Mucosa of descending colon (tissue), 3 donors: ENCODE measurements at regions of chr6 and their contacts with region 1.

Region 1: GRCh38 chr6:3742426-3743344 is 8.8 kb downstream of the PXDC1 start:
- DNase-seq: peak; percentile 89 to 94 (median 92)
- ATAC-seq: peak; percentile 94
- H3K4me3 ChIP-seq: no peak overlapping the region
- H3K4me1 ChIP-seq: peaks cover 6% of the 10 kb centered on the region
- CTCF ChIP-seq: peak; percentile 86

Region 2: GRCh38 chr6:3825851-3826581 is 83.3 kb after region 1 on chr6:
- intact Hi-C with region 1: loop called (anchors 10 kb)
- DNase-seq: peak; percentile 56 to 85 (median 75)
- ATAC-seq: peak; percentile 94
- H3K4me3 ChIP-seq: no peak overlapping the region
- H3K4me1 ChIP-seq: no peaks in the 10 kb centered on the region
- CTCF ChIP-seq: no peak

Region 3: GRCh38 chr6:3835055-3835731 is 92.5 kb after region 1 on chr6:
- intact Hi-C with region 1: loop called in 1 of 2 experiments (anchors 10 kb)
- DNase-seq: peak in 1 of 3 donors; percentile 41
- ATAC-seq: peak; percentile 91
- H3K4me3 ChIP-seq: no peak overlapping the region
- H3K4me1 ChIP-seq: no peaks in the 10 kb centered on the region
- CTCF ChIP-seq: no peak

Region 4: GRCh38 chr6:3887150-3887700 is 144.5 kb after region 1 on chr6:
- intact Hi-C with region 1: loop called in 1 of 2 experiments (anchors 5 kb)
- DNase-seq: peak in 1 of 3 donors; percentile 30
- ATAC-seq: peak; percentile 21
- H3K4me3 ChIP-seq: no peak overlapping the region
- H3K4me1 ChIP-seq: peaks cover 13% of the 10 kb centered on the region
- CTCF ChIP-seq: no peak

Region 5: DNA sequence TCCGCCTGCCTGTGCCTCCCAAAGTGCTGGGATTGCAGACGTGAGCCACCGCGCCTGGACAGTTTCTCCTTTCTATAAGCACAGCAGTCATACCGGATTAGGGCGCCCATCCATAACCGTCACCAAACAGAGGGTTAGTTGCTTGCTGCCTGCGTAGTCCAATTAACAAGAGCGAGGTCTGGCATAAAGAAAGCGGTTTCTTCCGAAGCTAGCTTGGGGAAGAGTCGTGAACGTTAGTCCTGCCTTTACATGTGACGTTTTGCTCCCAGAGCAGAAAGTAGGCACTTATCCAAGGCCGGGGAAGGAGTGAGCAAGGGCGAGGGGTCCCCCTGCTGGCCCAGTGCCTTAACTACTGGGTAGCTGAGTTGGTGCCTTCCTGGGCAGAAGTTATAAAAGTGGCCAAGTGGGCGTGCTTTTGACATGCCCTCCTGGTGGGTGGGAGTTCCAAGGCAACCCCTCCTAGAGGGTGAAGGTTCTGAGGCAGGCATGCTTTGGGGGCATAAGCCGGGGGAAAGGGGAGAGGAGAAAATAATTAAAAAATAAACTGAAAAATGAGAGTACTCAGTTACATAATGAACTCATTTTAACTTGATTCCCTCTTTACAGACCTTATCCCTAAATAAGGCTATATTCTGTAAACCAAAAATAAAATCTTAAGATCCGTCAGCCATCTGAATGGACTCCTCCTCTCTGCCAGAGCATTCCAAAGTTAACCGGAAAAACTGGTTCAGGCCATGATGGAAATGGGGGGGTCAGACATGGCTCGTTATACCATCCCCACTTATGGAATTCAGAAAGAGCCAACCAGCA is 248.2 kb after region 1 on chr6:
- intact Hi-C with region 1: loop called (anchors 5 to 10 kb)
- DNase-seq: peak; percentile 77 to 91 (median 89)
- ATAC-seq: peak; percentile 97
- H3K4me3 ChIP-seq: no peak overlapping the region
- H3K4me1 ChIP-seq: peaks cover 8% of the 10 kb centered on the region
- CTCF ChIP-seq: peak; percentile 79